PC-9 (cell line): ENCODE measurements at regions of chr9 and their contacts with region 1.

Region 1: DNA sequence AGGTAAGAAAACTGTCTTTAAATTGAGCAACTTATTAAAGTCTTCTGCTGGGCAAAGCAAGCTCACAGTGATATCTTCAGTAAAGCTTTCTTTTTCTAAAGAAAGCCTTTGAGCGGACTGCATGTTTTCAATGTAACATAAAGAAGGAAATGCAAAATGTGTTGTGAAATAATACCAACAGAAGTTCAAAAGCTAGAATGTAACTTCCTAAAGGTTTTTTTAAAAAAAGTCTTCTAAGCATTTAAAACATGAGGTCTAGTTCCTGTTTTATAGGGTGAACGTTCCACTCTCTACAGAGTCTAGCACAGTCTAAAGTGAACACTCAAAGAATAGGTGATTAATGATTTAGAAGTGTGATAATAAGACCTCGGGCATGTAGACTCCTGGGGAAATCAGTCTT is 62.9 kb downstream of the DENND1A start:
- DNase-seq: no peak
- H3K4me3 ChIP-seq: no peak overlapping the region
- H3K27ac ChIP-seq: no peak overlapping the region
- H3K4me1 ChIP-seq: no peaks in the 10 kb centered on the region
- H3K27me3 ChIP-seq: no peaks in the 10 kb centered on the region
- CTCF ChIP-seq: no peak

Region 2: DNA sequence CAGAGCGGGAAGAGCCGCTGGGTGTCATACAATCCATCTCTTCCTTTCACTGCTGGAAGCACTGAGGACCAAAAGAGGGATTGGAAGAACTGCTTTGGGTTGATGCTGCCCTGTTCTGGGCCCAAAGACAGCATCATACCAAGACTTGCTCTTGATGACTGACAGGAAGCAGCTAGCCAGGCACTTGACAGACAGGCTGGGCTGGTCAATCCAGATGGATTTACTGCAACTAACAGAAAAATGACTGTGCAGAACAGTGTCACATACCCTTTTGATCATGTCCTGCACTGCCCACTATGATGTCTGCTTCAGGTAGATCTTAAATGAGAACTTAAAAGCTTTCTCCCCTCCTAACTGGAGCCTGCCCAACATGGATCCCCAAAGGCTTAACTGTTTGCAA is 353.5 kb before region 1 on chr9:
- CTCF ChIA-PET with region 1: interaction called, 10 read pairs
- POLR2A ChIA-PET with region 1: no interaction called
- intact Hi-C with region 1: no loop called
- DNase-seq: peak; percentile 36 to 51
- H3K4me3 ChIP-seq: no peak overlapping the region
- H3K27ac ChIP-seq: no peak overlapping the region
- H3K4me1 ChIP-seq: peaks cover 9% of the 10 kb centered on the region
- H3K27me3 ChIP-seq: no peaks in the 10 kb centered on the region
- CTCF ChIP-seq: no peak

Region 3: GRCh38 chr9:123954518-123955280 is 87.7 kb after region 1 on chr9:
- CTCF ChIA-PET with region 1: no interaction called
- POLR2A ChIA-PET with region 1: no interaction called
- intact Hi-C with region 1: no loop called
- DNase-seq: no peak
- H3K4me3 ChIP-seq: no peak overlapping the region
- H3K27ac ChIP-seq: no peak overlapping the region
- H3K4me1 ChIP-seq: no peaks in the 10 kb centered on the region
- H3K27me3 ChIP-seq: peaks cover 4% of the 10 kb centered on the region; the same call in 1 of the 2 replicates
- CTCF ChIP-seq: no peak

Region 4: DNA sequence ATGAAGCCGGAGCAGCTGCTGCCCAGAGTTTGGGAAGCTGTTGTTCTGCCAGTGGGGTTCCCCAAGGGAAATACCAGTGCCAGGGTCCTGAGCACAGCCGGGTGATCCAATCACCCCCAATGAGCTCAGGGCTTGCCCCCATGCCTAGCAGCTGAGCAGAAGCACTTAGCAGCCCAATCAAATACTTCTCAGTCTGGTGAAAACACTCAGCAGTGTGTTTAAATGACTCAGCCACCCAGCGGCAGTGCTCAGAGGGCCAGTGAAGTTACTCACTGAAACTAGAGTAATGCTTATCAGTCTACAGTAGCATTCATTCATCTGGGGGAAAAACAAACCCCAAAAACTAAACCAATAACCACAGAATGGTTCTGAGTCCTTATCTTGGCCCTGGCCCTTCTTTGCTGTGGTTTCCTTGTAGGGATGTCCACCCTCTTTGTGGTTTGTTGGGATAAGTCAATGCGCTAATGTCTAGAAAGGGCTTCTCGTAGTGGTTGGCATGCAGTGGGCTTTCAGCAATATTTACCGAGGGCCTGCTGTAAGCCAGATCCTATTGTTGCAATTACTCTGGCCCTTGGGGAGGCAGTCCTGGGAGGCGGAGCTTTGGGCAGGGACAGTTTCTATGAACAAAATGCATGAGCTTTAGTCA is 187.7 kb after region 1 on chr9:
- CTCF ChIA-PET with region 1: no interaction called
- POLR2A ChIA-PET with region 1: no interaction called
- intact Hi-C with region 1: no loop called
- DNase-seq: peak; percentile 73 to 94
- H3K4me3 ChIP-seq: no peak overlapping the region
- H3K27ac ChIP-seq: peak overlapping the region; percentile 44
- H3K4me1 ChIP-seq: peaks cover 15% of the 10 kb centered on the region
- H3K27me3 ChIP-seq: peaks cover 44% of the 10 kb centered on the region
- CTCF ChIP-seq: no peak